ENCODE measurements at regions of chr11 and their contacts with region 1.

Region 1: DNA sequence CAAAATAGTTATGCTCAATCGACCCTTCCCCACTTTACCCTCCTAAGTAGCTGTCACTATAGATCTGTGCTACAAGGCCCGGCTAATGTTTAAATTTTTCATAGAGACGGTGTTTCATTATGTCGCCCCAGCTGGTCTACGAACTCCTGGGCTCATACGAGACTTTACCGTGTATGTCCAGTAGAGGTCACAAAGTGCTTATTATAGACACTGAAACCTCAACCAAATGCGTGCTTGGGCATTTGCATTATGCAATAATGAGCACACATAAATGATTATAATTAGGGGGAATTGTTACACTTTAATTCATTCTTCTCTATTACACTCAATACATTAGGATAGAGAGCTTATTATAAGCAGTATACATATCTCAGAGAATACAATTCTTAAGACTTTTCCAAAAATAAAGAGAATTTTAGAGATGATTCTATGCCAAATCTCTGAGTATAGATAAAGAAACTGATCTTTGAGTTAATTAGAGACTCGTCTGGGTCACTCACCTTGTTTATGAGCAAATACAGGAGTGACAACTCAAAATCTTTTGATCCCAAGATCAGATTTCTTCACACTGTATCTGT is 12.5 kb upstream of the MRPL16 start:
- DNase-seq: peak; percentile 51 to 73 (median 58)
- ATAC-seq: peak; percentile 91
- H3K4me3 ChIP-seq: no peak overlapping the region
- H3K27ac ChIP-seq: no peak overlapping the region
- H3K4me1 ChIP-seq: no peaks in the 10 kb centered on the region
- H3K27me3 ChIP-seq: no peaks in the 10 kb centered on the region
- CTCF ChIP-seq: peak in 6 of 7 experiments; percentile 43 to 86 (median 78)
- POLR2A ChIP-seq: no peak

Region 2: GRCh38 chr11:59918987-59919589 is 96.0 kb after region 1 on chr11:
- intact Hi-C with region 1: loop called (anchors 10 kb)
- DNase-seq: peak; percentile 31 to 66 (median 60)
- ATAC-seq: peak; percentile 52
- H3K4me3 ChIP-seq: no peak overlapping the region
- H3K27ac ChIP-seq: no peak overlapping the region
- H3K4me1 ChIP-seq: no peaks in the 10 kb centered on the region
- H3K27me3 ChIP-seq: no peaks in the 10 kb centered on the region
- CTCF ChIP-seq: peak; percentile 17 to 72 (median 59)
- POLR2A ChIP-seq: no peak

Region 3: GRCh38 chr11:60077981-60078380 is 254.9 kb after region 1 on chr11:
- intact Hi-C with region 1: no loop called
- DNase-seq: no peak
- ATAC-seq: no peak
- H3K4me3 ChIP-seq: no peak overlapping the region
- H3K27ac ChIP-seq: no peak overlapping the region
- H3K4me1 ChIP-seq: no peaks in the 10 kb centered on the region
- H3K27me3 ChIP-seq: no peaks in the 10 kb centered on the region
- CTCF ChIP-seq: no peak
- POLR2A ChIP-seq: no peak